Right cardiac atrium (tissue), 5 donors: ENCODE measurements at regions of chr14 and their contacts with region 1.

Region 1: DNA sequence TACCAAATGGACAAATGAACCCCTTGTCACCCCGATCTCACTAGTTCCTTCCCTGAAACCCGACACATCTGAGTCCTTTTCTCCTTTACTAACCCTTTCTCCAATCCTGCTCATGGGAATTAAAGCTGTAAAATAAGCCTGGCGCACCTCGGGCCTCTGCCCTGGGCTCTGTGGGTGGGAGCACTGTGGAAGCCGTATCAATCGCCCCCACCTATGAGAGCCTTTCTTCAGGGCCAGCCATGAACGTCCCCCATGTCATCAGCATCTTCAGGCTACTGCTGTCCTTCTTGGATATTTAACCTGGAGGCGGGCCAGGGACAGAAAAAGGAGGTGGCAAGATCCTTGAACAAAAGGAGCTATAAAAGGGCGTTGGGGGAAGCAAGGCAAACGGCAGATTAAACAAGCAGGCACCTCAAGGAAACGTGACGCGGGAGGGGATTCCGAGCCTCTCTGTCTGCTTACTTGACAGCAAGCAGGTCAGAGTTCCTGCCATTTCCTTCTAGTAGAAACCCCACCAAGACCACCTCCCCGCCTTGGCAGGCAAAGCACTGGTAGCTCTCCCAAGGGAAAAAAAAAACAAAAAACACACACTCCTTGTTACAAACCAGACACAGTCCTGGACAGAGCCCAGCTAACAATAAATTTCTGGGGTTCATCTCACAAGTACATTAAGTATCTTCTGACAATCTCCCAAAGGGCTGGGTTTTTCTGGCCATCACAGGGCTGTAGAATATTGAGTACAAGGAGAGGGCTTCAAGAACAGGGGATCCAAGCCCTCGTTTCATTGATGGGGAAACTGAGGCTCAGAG is 62.9 kb downstream of the DPF3 start:
- DNase-seq: peak in 1 of 3 donors; percentile 58
- ATAC-seq: peak in 1 of 2 donors; percentile 34
- H3K4me3 ChIP-seq: no peak overlapping the region
- H3K27ac ChIP-seq: peak overlapping the region; percentile 28
- H3K4me1 ChIP-seq: peaks cover 8% of the 10 kb centered on the region
- H3K27me3 ChIP-seq: no peaks in the 10 kb centered on the region

Region 2: DNA sequence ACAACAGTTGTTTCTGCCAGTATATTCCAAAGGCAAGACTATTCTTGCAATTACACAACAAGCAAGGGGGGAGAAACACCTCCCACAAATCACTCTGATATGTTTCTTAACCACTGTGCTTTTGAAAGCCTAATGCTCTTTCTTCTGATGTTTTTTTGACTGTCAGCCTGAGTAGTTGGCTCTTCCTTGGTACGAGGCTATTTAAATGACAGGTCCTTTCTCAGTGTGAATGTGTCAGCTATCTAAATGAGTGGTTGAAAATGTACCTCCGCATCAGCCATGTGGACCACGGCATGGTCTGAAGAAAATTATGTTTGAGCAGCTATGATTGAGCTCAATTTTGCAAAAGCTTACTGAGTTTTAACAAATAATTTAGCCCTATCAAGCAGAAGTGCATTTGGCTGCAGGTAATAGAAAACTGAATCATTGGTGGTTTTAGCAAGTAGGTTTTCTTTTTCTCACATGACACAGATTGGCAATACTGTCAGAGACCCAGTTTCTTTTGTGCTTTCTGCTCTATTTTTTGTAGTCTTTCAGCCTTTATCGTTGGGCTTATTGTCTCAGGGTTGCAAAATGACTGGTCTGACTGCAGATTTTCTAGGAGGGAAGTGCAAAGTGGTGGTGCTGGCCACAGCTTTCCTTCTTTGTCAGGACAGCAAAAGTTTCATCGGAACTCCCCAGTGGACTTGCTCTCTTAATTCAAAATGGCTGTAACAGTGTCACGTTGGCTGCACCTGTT is 736.0 kb before region 1 on chr14:
- intact Hi-C with region 1: no loop called
- DNase-seq: no peak
- ATAC-seq: no peak
- H3K4me3 ChIP-seq: no peak overlapping the region
- H3K27ac ChIP-seq: no peak overlapping the region
- H3K4me1 ChIP-seq: peaks cover 5% of the 10 kb centered on the region
- H3K27me3 ChIP-seq: no peaks in the 10 kb centered on the region

Region 3: GRCh38 chr14:72883961-72884360 is 53.0 kb after region 1 on chr14:
- intact Hi-C with region 1: loop called in 1 of 4 experiments (anchors 10 kb)
- DNase-seq: no peak
- ATAC-seq: no peak
- H3K4me3 ChIP-seq: no peak overlapping the region
- H3K27ac ChIP-seq: no peak overlapping the region
- H3K4me1 ChIP-seq: peaks cover 3% of the 10 kb centered on the region
- H3K27me3 ChIP-seq: no peaks in the 10 kb centered on the region

Region 4: GRCh38 chr14:73069585-73069984 is 238.6 kb after region 1 on chr14:
- intact Hi-C with region 1: no loop called
- DNase-seq: no peak
- ATAC-seq: no peak
- H3K4me3 ChIP-seq: no peak overlapping the region
- H3K27ac ChIP-seq: no peak overlapping the region
- H3K4me1 ChIP-seq: peaks cover 2% of the 10 kb centered on the region
- H3K27me3 ChIP-seq: no peaks in the 10 kb centered on the region